A673 (cell line): ENCODE measurements at regions of chr12 and their contacts with region 1.

Region 1: GRCh38 chr12:123533672-123534643 is at the start of gene RILPL1:
- DNase-seq: peak; percentile 73
- H3K4me3 ChIP-seq: peak within 1 kb of the TSS; percentile 80
- H3K27ac ChIP-seq: peak within 1 kb of the TSS; percentile 63
- H3K4me1 ChIP-seq: peaks cover 10% of the 10 kb centered on the region
- H3K27me3 ChIP-seq: no peaks in the 10 kb centered on the region
- CTCF ChIP-seq: peak; percentile 18
- total RNA-seq, gene RILPL1: 10.2 and 17.4 TPM in 2 replicates

Region 2: DNA sequence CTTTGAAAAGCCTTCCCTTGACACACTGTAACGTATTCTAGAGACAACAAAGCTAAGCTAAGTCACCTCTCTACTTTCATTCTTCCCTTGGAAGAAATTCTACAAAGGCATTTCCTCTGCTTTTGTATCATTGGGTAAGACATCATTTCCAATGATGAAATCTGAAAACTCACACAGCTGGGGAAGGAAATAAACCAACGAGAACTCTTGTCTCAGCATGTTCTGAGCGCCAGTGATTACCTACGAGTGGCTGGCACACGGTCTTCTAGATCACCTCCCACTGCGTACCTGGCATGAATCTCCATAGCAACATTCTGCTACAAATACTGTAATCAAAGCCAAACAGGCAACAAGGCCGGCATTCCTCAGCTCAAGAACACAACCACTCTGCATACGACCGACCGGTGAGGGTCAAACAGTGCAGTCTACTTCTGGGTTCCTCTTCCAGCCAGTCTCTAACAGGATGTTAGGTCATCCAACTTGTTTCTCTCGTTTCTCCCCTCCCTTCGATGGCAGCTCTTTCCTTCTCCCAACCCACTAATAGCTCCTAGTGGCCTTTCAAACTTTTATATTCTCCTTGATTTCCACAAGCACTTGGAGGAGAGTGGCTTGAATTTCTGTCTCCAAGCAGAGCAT is 645.6 kb before region 1 on chr12:
- CTCF ChIA-PET with region 1: no interaction called
- POLR2A ChIA-PET with region 1: no interaction called
- intact Hi-C with region 1: no loop called
- DNase-seq: peak; percentile 68
- H3K4me3 ChIP-seq: peak overlapping the region; percentile 28
- H3K27ac ChIP-seq: peak overlapping the region; percentile 72
- H3K4me1 ChIP-seq: peaks cover 64% of the 10 kb centered on the region
- H3K27me3 ChIP-seq: no peaks in the 10 kb centered on the region
- CTCF ChIP-seq: no peak

Region 3: DNA sequence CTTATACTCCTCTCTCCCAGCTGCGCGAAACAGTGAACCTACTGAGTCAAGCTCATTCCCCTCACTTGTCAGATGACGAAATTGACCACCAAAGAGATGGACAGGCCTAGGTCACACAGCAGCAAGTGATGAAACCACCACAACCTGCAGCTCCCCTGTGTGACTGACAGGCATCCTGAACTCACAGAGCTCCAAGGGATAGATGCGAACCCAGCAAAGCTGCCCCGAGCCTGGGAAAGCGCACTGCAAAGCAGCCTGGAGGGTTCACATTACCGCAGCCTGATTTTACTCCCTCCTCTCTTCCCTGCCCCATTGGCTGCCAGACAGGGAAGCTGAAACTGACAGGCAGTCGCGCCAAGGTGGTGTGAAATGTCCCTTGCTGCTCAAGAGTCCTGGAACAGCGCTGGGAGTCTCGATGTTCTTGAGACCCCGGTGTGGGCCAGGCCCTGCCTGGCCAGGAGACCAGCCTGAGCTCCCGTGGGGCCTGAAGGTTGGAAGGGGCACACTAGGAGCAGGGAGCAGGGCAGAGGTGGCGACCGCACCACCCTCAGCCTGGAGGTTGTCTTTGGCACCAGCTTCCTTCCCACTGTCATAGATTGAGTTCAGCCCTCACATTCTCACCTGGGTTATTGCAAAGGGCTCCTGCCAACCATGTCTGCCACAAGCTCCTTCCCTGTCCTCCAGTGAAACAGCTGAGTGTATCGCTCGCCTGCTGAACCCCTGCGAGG is 39.7 kb before region 1 on chr12:
- CTCF ChIA-PET with region 1: no interaction called
- POLR2A ChIA-PET with region 1: no interaction called
- intact Hi-C with region 1: no loop called
- DNase-seq: no peak
- H3K4me3 ChIP-seq: no peak overlapping the region
- H3K27ac ChIP-seq: no peak overlapping the region
- H3K4me1 ChIP-seq: no peaks in the 10 kb centered on the region
- H3K27me3 ChIP-seq: no peaks in the 10 kb centered on the region
- CTCF ChIP-seq: no peak

Region 4: DNA sequence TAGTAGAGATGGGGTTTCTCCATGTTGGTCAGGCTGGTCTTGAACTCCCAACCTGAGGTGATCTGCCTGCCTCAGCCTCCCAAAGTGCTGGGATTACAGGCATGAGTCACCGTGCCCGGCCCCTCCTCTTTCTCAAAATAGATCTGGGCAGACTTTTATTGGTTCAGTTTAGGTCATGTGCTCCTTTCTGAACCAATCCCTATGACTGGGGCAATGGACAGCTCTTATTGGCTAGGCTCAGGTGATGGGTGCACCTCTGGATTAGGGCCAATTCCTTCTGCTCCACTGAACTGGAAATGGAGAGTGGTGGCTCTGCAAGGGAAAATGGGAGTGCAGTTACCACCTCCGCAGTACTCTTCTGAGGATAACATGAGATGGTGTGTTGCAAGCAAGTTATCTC is 172.0 kb after region 1 on chr12:
- CTCF ChIA-PET with region 1: no interaction called
- POLR2A ChIA-PET with region 1: interaction called, 13 read pairs
- intact Hi-C with region 1: no loop called
- DNase-seq: peak; percentile 37
- H3K4me3 ChIP-seq: no peak overlapping the region
- H3K27ac ChIP-seq: no peak overlapping the region
- H3K4me1 ChIP-seq: no peaks in the 10 kb centered on the region
- H3K27me3 ChIP-seq: no peaks in the 10 kb centered on the region
- CTCF ChIP-seq: no peak